IMR-90 (cell line): ENCODE measurements at regions of chr14 and their contacts with region 1.

Region 1: DNA sequence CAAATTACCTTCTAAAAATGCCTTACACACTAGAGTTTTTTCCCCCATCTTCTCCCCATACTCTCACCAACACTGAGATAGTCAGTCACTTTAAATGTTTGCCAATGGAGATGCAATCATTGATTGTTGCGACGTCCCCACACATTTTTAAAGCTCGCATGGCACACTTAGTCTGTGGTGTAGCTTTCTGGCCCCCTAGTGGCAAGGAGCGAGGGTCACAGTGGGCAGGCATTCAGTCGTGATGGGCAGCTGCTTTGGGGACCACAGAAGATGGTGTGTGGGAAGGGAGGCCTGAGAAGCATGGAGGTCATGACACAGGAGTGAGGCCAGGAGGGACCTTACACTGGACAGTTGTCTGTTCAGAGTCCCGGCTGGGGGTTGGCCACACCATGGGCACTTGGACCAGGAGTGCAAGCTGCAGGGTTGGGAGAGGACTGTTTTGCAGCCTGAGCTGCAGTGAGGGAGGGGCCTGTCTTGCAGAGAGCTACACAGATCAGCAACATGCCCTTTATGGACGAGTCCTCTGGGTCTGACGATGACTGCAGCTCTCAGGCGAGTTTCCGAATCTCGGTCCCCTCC is 28.7 kb downstream of the PIGH start:
- DNase-seq: peak; percentile 44
- ATAC-seq: peak; percentile 95
- H3K4me3 ChIP-seq: no peak overlapping the region
- H3K27ac ChIP-seq: no peak overlapping the region
- H3K4me1 ChIP-seq: no peaks in the 10 kb centered on the region
- H3K27me3 ChIP-seq: peaks cover 9% of the 10 kb centered on the region
- CTCF ChIP-seq: peak; percentile 85
- POLR2A ChIP-seq: no peak
- RAD21 ChIP-seq: peak; percentile 77

Region 2: GRCh38 chr14:67426983-67427606 is 144.3 kb before region 1 on chr14:
- CTCF ChIA-PET with region 1: interaction called, 39 read pairs
- POLR2A ChIA-PET with region 1: no interaction called
- dilution Hi-C with region 1: no loop called
- in situ Hi-C with region 1: loop called (anchors 5 kb)
- intact Hi-C with region 1: loop called (anchors 1 kb)
- DNase-seq: peak; percentile 76
- ATAC-seq: peak; percentile 95
- H3K4me3 ChIP-seq: no peak overlapping the region
- H3K27ac ChIP-seq: no peak overlapping the region
- H3K4me1 ChIP-seq: no peaks in the 10 kb centered on the region
- H3K27me3 ChIP-seq: peaks cover 7% of the 10 kb centered on the region; the same call in 1 of the 2 replicates
- CTCF ChIP-seq: peak; percentile 85
- POLR2A ChIP-seq: no peak
- RAD21 ChIP-seq: peak; percentile 86

Region 3: GRCh38 chr14:67526676-67527459 is 44.5 kb before region 1 on chr14:
- CTCF ChIA-PET with region 1: interaction called, 28 read pairs
- POLR2A ChIA-PET with region 1: no interaction called
- dilution Hi-C with region 1: no loop called
- in situ Hi-C with region 1: no loop called
- intact Hi-C with region 1: loop called (anchors 1 kb)
- DNase-seq: peak; percentile 45
- ATAC-seq: peak; percentile 80
- H3K4me3 ChIP-seq: no peak overlapping the region
- H3K27ac ChIP-seq: no peak overlapping the region
- H3K4me1 ChIP-seq: no peaks in the 10 kb centered on the region
- H3K27me3 ChIP-seq: peaks cover 50% of the 10 kb centered on the region
- CTCF ChIP-seq: peak; percentile 53
- POLR2A ChIP-seq: no peak
- RAD21 ChIP-seq: peak; percentile 59

Region 4: GRCh38 chr14:67583711-67584644 is 12.6 kb after region 1 on chr14:
- CTCF ChIA-PET with region 1: interaction called, 24 read pairs
- POLR2A ChIA-PET with region 1: no interaction called
- dilution Hi-C with region 1: no loop called
- in situ Hi-C with region 1: no loop called
- intact Hi-C with region 1: no loop called
- DNase-seq: peak; percentile 52
- ATAC-seq: peak; percentile 94
- H3K4me3 ChIP-seq: no peak overlapping the region
- H3K27ac ChIP-seq: no peak overlapping the region
- H3K4me1 ChIP-seq: no peaks in the 10 kb centered on the region
- H3K27me3 ChIP-seq: peaks cover 4% of the 10 kb centered on the region; the same call in 1 of the 2 replicates
- CTCF ChIP-seq: peak; percentile 72
- POLR2A ChIP-seq: no peak
- RAD21 ChIP-seq: peak; percentile 85

Region 5: DNA sequence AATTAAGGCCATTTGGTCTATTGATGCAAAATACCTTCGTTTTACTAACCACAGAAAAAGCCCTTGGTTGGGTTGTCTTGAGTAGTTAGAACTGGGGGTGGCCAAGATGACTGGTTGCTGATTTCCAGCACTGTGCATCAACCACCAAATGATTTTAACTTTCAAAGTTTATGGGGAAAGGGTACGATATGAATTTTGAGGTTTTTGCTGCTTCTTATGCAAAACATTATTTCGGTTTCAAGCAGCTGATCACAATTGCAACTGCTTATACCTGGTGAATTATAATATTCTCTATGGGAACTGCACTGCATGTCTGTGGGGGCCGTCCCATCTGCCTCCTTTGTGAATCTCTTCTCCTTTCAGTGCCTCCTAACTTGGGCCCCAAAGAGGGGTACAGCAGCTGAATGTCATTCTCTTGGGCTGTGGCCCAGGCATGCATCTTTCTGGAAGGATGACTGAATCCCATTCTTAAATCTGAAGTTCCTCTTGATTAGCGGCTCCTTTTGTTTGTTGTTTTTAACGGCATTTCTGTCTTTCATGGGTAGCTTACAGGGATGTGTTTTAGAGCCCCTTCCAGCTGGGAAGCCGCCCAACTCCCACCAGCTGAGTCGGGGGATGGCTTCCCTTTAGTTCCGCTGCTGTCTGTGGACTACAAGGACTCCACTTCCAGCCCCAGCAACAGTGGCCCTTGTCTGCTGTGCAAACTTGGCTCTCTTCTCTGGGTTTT is 741.7 kb after region 1 on chr14:
- CTCF ChIA-PET with region 1: no interaction called
- POLR2A ChIA-PET with region 1: no interaction called
- dilution Hi-C with region 1: no loop called
- in situ Hi-C with region 1: no loop called
- intact Hi-C with region 1: no loop called
- DNase-seq: no peak
- ATAC-seq: no peak
- H3K4me3 ChIP-seq: no peak overlapping the region
- H3K27ac ChIP-seq: no peak overlapping the region
- H3K4me1 ChIP-seq: no peaks in the 10 kb centered on the region
- H3K27me3 ChIP-seq: no peaks in the 10 kb centered on the region
- CTCF ChIP-seq: no peak
- POLR2A ChIP-seq: no peak
- RAD21 ChIP-seq: no peak